ENCODE measurements at regions of chr18 and their contacts with region 1.

Region 1: GRCh38 chr18:8786478-8787370 is 81.4 kb downstream of the MTCL1 start:
- DNase-seq: no peak
- H3K4me3 ChIP-seq: no peak overlapping the region
- H3K27ac ChIP-seq: no peak overlapping the region
- H3K4me1 ChIP-seq: peaks cover 10 to 26% of the 10 kb centered on the region in 2 experiments; a peak in 3 of 4 replicates
- H3K27me3 ChIP-seq: no peaks in the 10 kb centered on the region
- CTCF ChIP-seq: no peak
- EP300 ChIP-seq: no peak
- RAD21 ChIP-seq: no peak

Region 2: DNA sequence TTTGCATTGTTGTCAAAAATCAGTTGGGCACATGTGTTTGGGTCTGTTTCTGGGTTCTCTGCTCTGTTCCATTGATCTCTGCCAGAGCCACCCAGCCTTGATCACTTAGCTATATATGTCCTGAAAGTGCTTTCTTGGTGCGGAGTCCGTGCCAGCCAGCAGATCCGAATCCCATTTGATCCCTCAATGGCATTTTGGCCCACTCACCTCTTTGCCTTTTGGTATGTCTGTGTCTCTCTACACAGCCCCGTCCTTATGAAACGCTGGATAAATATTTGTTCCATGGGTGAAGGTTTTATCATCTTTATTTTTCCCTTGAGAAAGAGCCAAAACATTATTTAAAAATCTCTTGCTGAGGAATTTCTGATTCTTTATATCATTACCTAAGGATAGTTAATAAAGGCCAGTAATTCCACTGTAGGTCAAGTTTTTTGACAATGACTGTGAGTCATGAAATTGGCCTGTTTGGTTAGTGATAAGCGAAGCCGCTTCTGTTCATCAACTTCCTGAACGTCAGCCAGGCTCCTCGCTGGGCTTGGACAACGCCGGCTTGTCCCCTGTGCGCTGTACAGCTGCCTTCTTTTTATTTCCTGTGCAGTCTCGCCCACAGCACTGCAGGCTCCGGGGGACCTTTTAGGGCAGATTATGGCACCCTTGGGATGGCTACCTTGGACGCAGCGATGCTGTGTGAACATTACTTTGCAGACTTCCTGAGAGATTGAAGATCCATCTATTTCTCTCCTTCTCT is 56.5 kb before region 1 on chr18:
- CTCF ChIA-PET with region 1: no interaction called
- POLR2A ChIA-PET with region 1: no interaction called
- DNase-seq: peak; percentile 58
- H3K4me3 ChIP-seq: peak overlapping the region in 1 of 2 experiments; percentile 16; a peak in 1 of 4 replicates
- H3K27ac ChIP-seq: peak overlapping the region; percentile 64 to 79
- H3K4me1 ChIP-seq: peaks cover 6 to 9% of the 10 kb centered on the region in 2 experiments; a peak in 2 of 4 replicates
- H3K27me3 ChIP-seq: no peaks in the 10 kb centered on the region
- CTCF ChIP-seq: no peak
- EP300 ChIP-seq: peak; percentile 36 to 57; a peak in 1 of 4 replicates
- RAD21 ChIP-seq: no peak

Region 3: GRCh38 chr18:8776013-8776943 is 10.4 kb before region 1 on chr18:
- CTCF ChIA-PET with region 1: interaction called, 11 read pairs
- POLR2A ChIA-PET with region 1: no interaction called
- DNase-seq: no peak
- H3K4me3 ChIP-seq: no peak overlapping the region
- H3K27ac ChIP-seq: no peak overlapping the region
- H3K4me1 ChIP-seq: peaks cover 3 to 12% of the 10 kb centered on the region in 2 experiments; a peak in 2 of 4 replicates
- H3K27me3 ChIP-seq: no peaks in the 10 kb centered on the region
- CTCF ChIP-seq: no peak
- EP300 ChIP-seq: no peak
- RAD21 ChIP-seq: no peak

Region 4: DNA sequence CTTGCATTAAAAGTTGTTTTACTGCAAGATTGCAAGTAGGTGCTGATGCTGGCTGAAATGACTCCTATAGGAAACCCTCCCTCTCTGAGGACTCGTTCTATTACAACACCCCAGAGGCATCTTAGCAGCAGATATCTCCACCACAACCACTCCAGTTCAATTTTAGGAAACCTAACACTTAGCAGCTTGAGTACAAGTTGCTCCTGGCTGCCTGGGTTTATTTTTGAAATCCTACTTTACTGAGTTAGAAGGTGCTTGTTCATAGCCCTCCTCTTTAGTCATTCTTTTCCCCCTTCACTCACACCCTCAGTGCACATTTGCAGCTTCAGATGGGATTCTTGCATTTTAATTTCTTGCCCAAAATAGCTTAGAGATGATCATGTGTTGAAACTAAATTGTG is 30.1 kb after region 1 on chr18:
- CTCF ChIA-PET with region 1: no interaction called
- POLR2A ChIA-PET with region 1: no interaction called
- DNase-seq: no peak
- H3K4me3 ChIP-seq: no peak overlapping the region
- H3K27ac ChIP-seq: no peak overlapping the region
- H3K4me1 ChIP-seq: peaks cover 0 to 14% of the 10 kb centered on the region in 2 experiments; a peak in 3 of 4 replicates
- H3K27me3 ChIP-seq: no peaks in the 10 kb centered on the region
- CTCF ChIP-seq: no peak
- EP300 ChIP-seq: no peak
- RAD21 ChIP-seq: no peak

Region 5: DNA sequence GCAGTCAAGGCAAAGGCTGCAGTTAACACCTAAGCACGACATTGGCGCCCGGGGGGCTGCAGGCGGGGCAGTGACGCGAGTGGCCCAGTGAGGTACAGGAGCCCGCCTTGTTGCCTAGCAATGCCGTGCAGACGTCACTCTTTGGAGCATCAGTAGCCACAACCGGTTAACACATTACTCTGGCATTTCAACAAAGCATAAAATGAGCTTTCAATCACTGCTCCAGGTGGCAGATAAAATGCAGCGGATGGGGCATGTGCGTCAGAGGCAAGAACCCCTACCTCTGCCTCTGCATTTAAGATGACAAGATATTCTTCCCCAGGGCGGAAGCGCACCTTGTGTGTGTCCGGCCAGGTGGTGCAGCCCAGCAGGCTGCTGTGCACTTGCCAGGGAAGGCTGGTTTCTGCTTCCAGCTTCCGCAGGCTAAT is 58.0 kb after region 1 on chr18:
- CTCF ChIA-PET with region 1: no interaction called
- POLR2A ChIA-PET with region 1: no interaction called
- DNase-seq: peak; percentile 56
- H3K4me3 ChIP-seq: no peak overlapping the region
- H3K27ac ChIP-seq: no peak overlapping the region
- H3K4me1 ChIP-seq: peaks cover 0 to 11% of the 10 kb centered on the region in 2 experiments; a peak in 1 of 4 replicates
- H3K27me3 ChIP-seq: no peaks in the 10 kb centered on the region
- CTCF ChIP-seq: no peak
- EP300 ChIP-seq: no peak
- RAD21 ChIP-seq: no peak